ENCODE measurements at regions of chr7 and their contacts with region 1.

Region 1: DNA sequence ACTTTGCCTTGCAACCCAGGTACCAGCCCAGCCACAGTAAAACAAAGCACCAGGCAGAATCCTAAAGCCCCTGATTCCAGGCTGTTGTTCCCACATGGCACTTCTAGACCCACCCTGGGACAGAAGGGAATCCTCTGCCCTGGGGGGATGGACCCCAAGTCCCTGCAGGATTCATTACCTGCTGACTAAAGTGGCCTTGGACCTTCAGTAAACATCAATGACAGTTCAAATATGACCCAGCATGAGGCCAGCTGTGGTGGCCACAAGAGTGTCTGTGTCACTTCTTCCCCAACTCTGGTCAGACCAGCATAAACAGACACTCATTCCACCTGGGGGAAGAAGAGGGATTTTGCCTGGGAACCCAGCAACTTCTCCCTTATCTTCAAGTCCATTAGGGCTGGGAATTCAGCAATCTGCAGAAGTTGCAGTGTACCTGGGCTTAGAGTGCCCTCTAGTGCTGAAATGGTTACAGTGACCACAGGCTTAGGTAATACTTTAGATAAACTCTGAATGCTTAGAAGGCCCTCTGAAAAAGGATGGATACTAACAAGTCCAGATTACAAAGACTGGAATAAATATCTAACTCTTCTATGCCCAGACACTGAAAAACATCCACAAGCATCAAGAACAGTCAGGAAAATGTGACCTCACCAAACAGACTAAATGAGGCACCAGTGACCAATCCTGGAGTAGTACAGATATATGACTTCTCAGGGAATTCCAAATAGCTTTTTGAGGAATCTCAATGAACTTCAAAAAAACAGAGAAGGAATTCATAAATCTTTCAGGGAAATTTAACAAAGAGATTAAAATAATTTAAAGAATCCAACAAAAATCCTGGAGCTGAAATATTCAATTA is 108.5 kb upstream of the TMEM168 start:
- DNase-seq: peak; percentile 49
- H3K4me3 ChIP-seq: no peak overlapping the region
- H3K27ac ChIP-seq: no peak overlapping the region
- H3K27me3 ChIP-seq: no peaks in the 10 kb centered on the region
- CTCF ChIP-seq: peak; percentile 89

Region 2: GRCh38 chr7:112550468-112551060 is 348.1 kb before region 1 on chr7:
- CTCF ChIA-PET with region 1: interaction called, 42 read pairs
- POLR2A ChIA-PET with region 1: no interaction called
- DNase-seq: peak; percentile 24
- H3K4me3 ChIP-seq: no peak overlapping the region
- H3K27ac ChIP-seq: no peak overlapping the region
- H3K27me3 ChIP-seq: no peaks in the 10 kb centered on the region
- CTCF ChIP-seq: peak; percentile 98

Region 3: GRCh38 chr7:112596260-112596659 is 302.4 kb before region 1 on chr7:
- CTCF ChIA-PET with region 1: no interaction called
- POLR2A ChIA-PET with region 1: no interaction called
- DNase-seq: no peak
- H3K4me3 ChIP-seq: no peak overlapping the region
- H3K27ac ChIP-seq: no peak overlapping the region
- H3K27me3 ChIP-seq: no peaks in the 10 kb centered on the region
- CTCF ChIP-seq: no peak

Measured in AG04450 (cell line).